ENCODE measurements at regions of chr9 and their contacts with region 1.

Region 1: GRCh38 chr9:74973714-74974113 is 21.0 kb upstream of the C9orf40 start:
- DNase-seq: no peak
- ATAC-seq: no peak
- H3K4me3 ChIP-seq: no peak overlapping the region
- H3K4me3 Mint-ChIP-seq: no peak overlapping the region
- H3K27ac ChIP-seq: no peak overlapping the region
- H3K27ac Mint-ChIP-seq: no peak overlapping the region
- H3K4me1 ChIP-seq: peaks cover 0 to 6% of the 10 kb centered on the region in 2 experiments
- H3K4me1 Mint-ChIP-seq: peaks cover 4 to 13% (median 13%) of the 10 kb centered on the region in 3 donors
- H3K27me3 ChIP-seq: no peaks in the 10 kb centered on the region
- H3K27me3 Mint-ChIP-seq: no peaks in the 10 kb centered on the region

Region 2: DNA sequence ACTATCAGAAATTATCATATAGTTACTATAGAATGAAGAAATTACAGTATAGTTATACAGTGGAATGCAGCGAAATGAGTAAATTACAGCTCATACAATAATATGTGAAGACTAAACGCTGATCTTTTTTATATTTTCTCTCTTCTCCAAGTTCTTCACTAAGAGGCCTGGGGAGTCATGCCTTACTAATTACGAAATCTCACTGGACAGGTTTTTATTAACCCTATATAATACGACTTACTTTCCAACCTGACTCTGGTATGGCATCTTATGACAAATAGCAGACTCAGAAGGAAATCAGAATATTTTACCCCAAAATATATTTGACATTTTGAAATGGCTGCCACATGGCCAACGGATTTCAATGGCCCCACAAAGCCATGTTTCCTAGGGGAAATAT is 45.3 kb after region 1 on chr9:
- CTCF ChIA-PET with region 1: no interaction called
- POLR2A ChIA-PET with region 1: no interaction called
- DNase-seq: no peak
- ATAC-seq: no peak
- H3K4me3 ChIP-seq: no peak overlapping the region
- H3K4me3 Mint-ChIP-seq: no peak overlapping the region
- H3K27ac ChIP-seq: no peak overlapping the region
- H3K27ac Mint-ChIP-seq: peak overlapping the region in 1 of 2 donors; percentile 11
- H3K4me1 ChIP-seq: peaks cover 8% of the 10 kb centered on the region in 2 experiments
- H3K4me1 Mint-ChIP-seq: peaks cover 45 to 52% (median 47%) of the 10 kb centered on the region in 3 donors
- H3K27me3 ChIP-seq: no peaks in the 10 kb centered on the region
- H3K27me3 Mint-ChIP-seq: no peaks in the 10 kb centered on the region

Region 3: DNA sequence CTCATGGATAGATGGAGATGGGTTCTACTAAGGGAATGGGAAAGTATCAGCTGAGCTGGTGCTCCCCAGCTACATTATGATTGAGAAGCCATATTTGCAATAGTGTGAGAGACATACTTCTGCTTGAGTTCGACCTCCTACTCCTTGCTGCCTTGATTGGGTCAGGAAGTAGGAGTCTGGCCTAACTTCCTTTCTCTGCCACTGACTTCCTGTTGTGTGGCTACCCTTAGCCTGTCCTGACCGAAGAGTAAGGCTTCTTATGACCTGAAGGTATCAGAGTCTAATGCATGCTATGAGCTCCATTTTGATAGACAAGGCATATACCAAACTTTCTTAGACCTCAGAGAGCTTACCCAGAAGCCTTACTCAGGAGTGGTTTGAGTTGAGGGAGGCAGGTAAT is 168.5 kb after region 1 on chr9:
- CTCF ChIA-PET with region 1: no interaction called
- POLR2A ChIA-PET with region 1: interaction called in 1 of 2 experiments, 11 read pairs
- DNase-seq: peak in 1 of 35 experiments; percentile 42
- ATAC-seq: peak in 3 of 4 experiments; percentile 31 to 49 (median 48)
- H3K4me3 ChIP-seq: no peak overlapping the region
- H3K4me3 Mint-ChIP-seq: peak overlapping the region in 2 of 3 donors; percentile 41 to 50
- H3K27ac ChIP-seq: peak overlapping the region; percentile 46
- H3K27ac Mint-ChIP-seq: peak overlapping the region; percentile 82 to 88
- H3K4me1 ChIP-seq: peaks cover 32 to 53% of the 10 kb centered on the region in 2 experiments
- H3K4me1 Mint-ChIP-seq: peaks cover 74 to 86% (median 80%) of the 10 kb centered on the region in 3 donors
- H3K27me3 ChIP-seq: no peaks in the 10 kb centered on the region
- H3K27me3 Mint-ChIP-seq: no peaks in the 10 kb centered on the region

Region 4: GRCh38 chr9:75265525-75265972 is 291.8 kb after region 1 on chr9:
- CTCF ChIA-PET with region 1: no interaction called
- POLR2A ChIA-PET with region 1: no interaction called
- DNase-seq: peak in 26 of 35 experiments; percentile 2 to 68 (median 34)
- ATAC-seq: peak; percentile 43 to 60 (median 58)
- H3K4me3 ChIP-seq: no peak overlapping the region
- H3K4me3 Mint-ChIP-seq: no peak overlapping the region
- H3K27ac ChIP-seq: no peak overlapping the region
- H3K27ac Mint-ChIP-seq: no peak overlapping the region
- H3K4me1 ChIP-seq: no peaks in the 10 kb centered on the region
- H3K4me1 Mint-ChIP-seq: peaks cover 2 to 6% (median 2%) of the 10 kb centered on the region in 3 donors
- H3K27me3 ChIP-seq: no peaks in the 10 kb centered on the region
- H3K27me3 Mint-ChIP-seq: no peaks in the 10 kb centered on the region